PC-9 (cell line): ENCODE measurements at regions of chr14 and their contacts with region 1.

Region 1: DNA sequence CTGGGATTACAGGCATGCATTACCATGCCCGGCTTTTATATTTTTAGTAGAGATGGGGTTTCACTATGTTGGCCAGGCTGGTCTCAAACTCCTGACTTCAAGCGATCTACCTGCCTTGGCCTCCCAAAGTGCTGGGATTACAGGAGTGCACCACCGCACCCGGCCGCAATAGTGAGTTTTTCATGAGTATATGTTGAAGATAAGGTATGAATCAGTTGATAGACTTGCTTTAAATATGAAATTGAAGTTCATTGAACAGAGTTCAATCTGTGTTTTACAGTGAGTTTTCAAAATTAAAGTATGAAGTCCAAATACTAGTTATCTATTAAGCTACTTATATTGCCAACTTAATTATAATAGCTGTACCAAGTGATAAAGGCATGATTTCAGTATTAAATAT is 35.1 kb downstream of the SNAPC1 start:
- DNase-seq: no peak
- H3K4me3 ChIP-seq: no peak overlapping the region
- H3K27ac ChIP-seq: no peak overlapping the region
- H3K4me1 ChIP-seq: no peaks in the 10 kb centered on the region
- H3K27me3 ChIP-seq: no peaks in the 10 kb centered on the region
- CTCF ChIP-seq: no peak

Region 2: DNA sequence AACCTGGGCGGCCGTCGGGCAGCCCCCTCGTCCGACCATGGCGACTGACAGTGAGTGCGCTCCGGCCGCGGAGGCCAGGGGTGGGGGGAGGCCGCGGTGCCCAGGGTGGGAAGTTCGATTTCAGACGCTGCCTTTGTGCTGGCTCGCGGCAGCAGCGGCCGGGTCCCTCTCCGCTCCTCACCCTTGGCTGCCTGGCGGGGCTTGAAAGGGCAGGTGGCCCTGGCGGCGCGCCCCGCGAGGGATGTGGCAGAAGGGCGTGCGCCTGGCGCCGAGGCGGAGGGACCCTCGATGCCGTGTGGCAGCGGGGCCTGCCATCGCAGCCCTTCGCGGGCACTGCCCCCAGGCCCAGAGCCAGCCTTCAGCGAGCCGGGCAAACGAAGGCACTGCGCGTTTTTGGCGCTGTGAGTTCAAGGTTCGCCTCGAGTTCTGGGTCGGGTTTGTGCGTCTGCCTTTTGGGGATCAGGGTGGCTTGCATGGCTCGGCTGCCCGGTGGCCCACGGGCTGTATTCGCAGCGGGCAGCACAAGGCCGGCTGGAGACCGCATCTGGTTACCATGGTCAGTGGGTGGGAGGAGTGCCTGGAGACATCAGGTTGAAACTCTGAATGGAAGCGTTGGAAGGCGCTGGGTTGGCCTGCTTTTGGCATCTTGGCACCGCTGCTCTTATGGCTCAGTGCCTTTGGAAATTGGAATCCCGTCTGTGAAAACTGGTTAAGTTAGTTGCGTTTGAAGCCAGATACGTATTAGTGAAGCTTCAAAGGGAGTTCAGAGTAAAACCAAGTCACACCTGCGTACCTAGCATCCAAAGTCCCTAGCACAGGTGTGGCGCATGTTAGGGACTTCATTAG is 15.7 kb after region 1 on chr14:
- CTCF ChIA-PET with region 1: no interaction called
- POLR2A ChIA-PET with region 1: interaction called, 26 read pairs
- intact Hi-C with region 1: no loop called
- DNase-seq: no peak
- H3K4me3 ChIP-seq: no peak overlapping the region
- H3K27ac ChIP-seq: no peak overlapping the region
- H3K4me1 ChIP-seq: no peaks in the 10 kb centered on the region
- H3K27me3 ChIP-seq: no peaks in the 10 kb centered on the region
- CTCF ChIP-seq: no peak